ENCODE measurements at regions of chr17 and their contacts with region 1.

Region 1: DNA sequence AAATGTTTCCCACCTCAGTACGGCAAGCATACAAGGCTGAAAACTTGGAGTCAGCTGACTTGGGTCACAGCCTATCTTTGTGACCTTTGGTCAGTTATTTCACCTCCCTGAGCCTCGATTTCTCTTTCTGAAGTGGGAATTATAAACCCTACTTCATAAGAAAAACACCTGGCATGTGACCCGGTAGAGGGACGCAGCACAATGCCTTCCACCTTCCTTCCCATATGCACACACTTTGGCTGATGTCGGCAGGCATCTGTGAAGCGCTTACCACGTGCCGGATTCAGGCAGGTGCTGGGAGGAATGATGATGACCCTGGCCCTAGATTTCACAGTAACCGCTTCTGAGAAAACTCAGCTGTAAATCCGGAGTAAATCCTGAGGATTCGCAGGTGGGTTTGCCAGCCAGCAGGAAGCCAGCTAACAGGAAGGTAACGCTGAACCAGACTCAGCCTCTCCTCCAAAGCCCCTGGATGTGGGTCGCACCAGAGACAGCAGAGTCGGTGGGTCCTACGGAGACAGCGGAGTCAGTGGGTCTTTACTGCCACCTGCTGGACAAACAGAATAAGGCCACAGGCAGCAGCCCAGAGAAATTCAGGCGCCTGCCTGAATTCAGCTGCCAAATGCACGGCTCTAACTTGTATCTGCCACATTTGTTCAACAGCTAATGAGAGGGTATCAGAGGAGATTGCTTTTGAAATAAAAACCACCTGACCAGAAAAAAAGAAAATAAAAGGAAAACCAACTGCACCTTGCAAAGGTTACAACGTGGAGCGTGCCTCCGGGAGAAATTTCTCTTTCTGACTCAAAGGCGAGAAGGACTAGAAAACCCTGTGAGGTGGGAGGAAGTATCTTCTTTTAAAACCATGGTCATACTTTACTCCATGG is 16.6 kb downstream of the COPRS start:
- DNase-seq: peak; percentile 74
- H3K4me3 Mint-ChIP-seq: no peak overlapping the region
- H3K27ac Mint-ChIP-seq: no peak overlapping the region
- H3K4me1 Mint-ChIP-seq: no peaks in the 10 kb centered on the region
- H3K27me3 Mint-ChIP-seq: peaks cover 4% of the 10 kb centered on the region

Region 2: DNA sequence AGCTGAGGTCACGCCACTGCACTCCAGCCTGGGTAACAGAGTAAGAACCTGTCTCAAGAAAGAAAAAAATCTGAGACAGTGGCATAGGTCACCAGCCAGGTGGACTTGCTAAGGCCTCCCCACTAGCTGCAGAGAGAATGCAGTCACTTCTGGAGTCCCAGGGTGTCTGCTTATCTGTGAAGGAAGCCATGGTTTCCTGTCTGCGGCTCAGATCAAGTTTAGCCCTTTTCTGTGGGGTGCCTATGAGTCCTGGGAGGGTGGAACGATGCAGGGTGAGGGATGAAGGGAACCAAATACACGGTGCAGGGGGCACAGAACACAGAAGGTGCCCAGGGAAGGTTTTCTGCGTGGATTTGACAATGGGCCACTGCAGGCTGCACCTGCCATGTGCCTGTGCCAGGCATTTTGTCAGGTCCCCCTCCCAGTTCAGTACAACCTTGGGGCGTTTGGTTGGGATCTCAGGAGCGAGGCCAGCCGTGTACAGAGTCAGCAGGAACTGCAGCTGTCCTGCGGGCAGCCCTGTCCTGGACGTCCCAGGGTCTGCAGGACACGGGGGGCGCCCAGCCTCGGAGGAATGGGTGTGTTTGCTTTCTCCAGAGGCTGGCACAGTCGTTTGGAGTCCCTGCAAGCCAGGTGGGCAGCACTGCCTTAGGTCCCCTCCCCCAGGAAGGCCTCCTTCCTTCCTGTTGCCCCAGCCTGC is 409.2 kb before region 1 on chr17:
- CTCF ChIA-PET with region 1: interaction called, 23 read pairs
- POLR2A ChIA-PET with region 1: no interaction called
- intact Hi-C with region 1: loop called (anchors 5 kb)
- DNase-seq: peak; percentile 50
- H3K4me3 Mint-ChIP-seq: no peak overlapping the region
- H3K27ac Mint-ChIP-seq: no peak overlapping the region
- H3K4me1 Mint-ChIP-seq: peaks cover 16% of the 10 kb centered on the region
- H3K27me3 Mint-ChIP-seq: peaks cover 9% of the 10 kb centered on the region

Region 3: DNA sequence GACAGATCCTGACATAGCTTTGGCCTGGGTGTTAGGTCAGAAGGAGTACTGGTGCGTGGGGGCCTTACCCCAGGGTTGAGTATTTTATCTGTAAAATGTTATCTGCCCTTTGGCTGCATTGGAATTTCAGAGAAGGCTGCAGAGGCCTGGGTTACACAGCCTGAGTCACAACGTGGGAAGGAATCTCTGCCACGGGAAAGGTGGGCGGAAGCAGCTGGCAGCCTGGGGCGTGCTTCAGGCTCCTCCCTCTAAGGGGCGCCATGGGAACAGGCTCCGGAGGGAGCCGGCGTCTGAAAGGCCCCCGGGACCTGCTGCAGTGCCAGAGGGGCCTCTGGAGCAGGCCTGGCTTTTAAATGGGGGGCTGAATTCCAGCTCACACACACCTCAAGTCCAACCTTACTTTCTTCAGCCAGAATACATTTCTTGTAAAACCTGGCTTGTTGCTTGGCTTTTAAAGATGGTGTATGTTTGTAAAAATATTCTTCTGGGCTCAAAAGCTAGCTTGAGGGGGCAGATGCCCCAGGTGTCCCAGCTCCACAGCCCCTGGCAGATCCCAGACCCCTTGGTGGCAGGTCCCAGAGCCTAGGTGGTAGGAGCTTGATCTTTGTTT is 308.8 kb before region 1 on chr17:
- CTCF ChIA-PET with region 1: interaction called, 23 read pairs
- POLR2A ChIA-PET with region 1: no interaction called
- intact Hi-C with region 1: no loop called
- DNase-seq: peak; percentile 41
- H3K4me3 Mint-ChIP-seq: no peak overlapping the region
- H3K27ac Mint-ChIP-seq: no peak overlapping the region
- H3K4me1 Mint-ChIP-seq: peaks cover 16% of the 10 kb centered on the region
- H3K27me3 Mint-ChIP-seq: no peaks in the 10 kb centered on the region

Region 4: GRCh38 chr17:31549525-31550388 is 292.7 kb before region 1 on chr17:
- CTCF ChIA-PET with region 1: interaction called, 23 read pairs
- POLR2A ChIA-PET with region 1: no interaction called
- intact Hi-C with region 1: loop called (anchors 5 kb)
- DNase-seq: peak; percentile 96
- H3K4me3 Mint-ChIP-seq: peak overlapping the region; percentile 95
- H3K27ac Mint-ChIP-seq: peak overlapping the region; percentile 87
- H3K4me1 Mint-ChIP-seq: peaks cover 18% of the 10 kb centered on the region
- H3K27me3 Mint-ChIP-seq: no peaks in the 10 kb centered on the region

Region 5: GRCh38 chr17:31558748-31559644 is 283.4 kb before region 1 on chr17:
- CTCF ChIA-PET with region 1: interaction called, 48 read pairs
- POLR2A ChIA-PET with region 1: no interaction called
- intact Hi-C with region 1: no loop called
- DNase-seq: peak; percentile 69
- H3K4me3 Mint-ChIP-seq: peak overlapping the region; percentile 59
- H3K27ac Mint-ChIP-seq: no peak overlapping the region
- H3K4me1 Mint-ChIP-seq: peaks cover 26% of the 10 kb centered on the region
- H3K27me3 Mint-ChIP-seq: peaks cover 4% of the 10 kb centered on the region

Region 6: DNA sequence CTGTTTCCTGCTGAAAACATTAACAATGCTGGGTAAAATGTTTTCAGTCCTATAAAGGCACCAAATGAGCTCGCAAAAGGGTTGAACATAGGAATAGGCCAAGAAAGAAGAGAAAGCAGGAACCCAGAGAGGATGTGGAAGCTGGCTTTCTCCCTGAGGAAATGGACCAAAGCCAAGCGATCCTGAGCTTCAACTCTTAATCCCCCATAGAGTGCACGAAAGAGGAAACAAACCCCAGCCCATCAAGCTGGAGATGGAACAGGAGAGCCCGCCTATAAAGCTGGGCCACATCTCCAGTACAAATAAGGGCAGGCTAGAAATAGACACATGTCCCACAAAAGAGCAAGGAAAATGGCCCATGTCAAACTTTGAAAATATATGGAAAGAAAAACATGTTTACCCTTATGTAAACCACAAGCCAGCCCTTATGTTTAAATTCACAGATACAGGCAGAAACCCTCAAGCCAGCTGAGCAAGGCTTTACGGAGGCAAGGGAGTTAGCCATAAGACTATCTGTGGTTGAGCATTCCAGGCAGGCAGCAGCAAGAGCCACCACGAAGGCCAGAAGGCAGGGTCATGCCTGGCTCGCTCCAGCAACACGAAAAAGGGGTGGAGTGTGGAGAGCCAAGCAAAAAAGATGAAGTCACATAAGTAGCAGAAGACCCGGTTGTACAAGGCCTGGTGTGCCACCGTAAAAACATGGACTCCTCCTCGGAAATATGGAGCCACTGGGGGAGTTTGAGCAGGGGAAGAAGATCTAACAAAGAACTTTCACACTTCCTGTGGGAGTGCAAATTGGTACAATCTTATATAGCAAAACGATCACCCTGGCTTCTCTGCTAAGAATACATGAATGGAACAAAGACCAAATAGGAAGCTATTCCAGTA is 11.2 kb before region 1 on chr17:
- CTCF ChIA-PET with region 1: interaction called, 15 read pairs
- POLR2A ChIA-PET with region 1: no interaction called
- intact Hi-C with region 1: no loop called
- DNase-seq: no peak
- H3K4me3 Mint-ChIP-seq: no peak overlapping the region
- H3K27ac Mint-ChIP-seq: no peak overlapping the region
- H3K4me1 Mint-ChIP-seq: peaks cover 4% of the 10 kb centered on the region
- H3K27me3 Mint-ChIP-seq: peaks cover 1% of the 10 kb centered on the region

Region 7: DNA sequence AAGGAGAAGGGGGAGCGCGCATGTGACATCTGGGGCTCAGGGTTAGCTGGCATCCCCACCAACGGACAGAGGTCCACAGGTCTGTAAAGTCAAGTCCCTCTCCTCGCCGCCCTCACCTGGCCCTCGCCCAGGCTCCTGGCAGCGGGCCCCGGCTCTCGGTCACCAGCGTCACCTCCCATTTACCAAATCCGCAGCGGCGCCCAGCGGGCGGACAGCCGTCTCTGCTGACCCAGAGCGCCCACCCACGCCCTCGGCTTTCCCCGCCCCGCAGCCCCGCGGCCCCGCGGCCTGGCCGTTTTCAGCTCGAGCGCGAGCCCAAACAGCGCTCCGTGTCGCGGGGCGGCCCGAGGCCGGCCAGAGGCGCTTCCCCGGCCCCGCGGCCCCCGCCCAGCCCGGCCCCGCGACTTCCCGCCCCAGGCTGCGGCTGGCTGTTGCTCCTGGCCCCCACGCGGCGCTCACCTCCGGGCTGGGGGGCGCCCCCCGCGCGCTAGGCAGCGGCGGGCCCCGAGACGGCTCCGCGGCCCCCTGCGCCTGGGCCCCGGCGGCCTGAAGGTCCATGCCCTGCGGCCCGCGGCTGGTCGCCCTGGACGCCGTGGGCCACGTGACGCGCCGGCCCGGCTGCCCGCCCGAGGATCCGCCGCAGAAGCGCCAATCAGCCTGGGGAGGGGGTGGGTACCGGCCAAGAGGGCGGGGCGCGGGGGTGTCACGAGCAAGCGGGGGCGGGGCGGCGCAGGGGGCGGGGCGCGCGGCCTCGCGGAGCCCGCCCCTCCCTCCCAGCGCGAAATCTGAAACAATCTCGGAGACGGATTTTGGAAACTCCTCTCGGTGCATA is 16.4 kb after region 1 on chr17 and contains the start of gene COPRS:
- CTCF ChIA-PET with region 1: interaction called, 44 read pairs
- POLR2A ChIA-PET with region 1: no interaction called
- intact Hi-C with region 1: no loop called
- DNase-seq: peak; percentile 87
- H3K4me3 Mint-ChIP-seq: peak within 1 kb of the TSS; percentile 86
- H3K27ac Mint-ChIP-seq: peak within 1 kb of the TSS; percentile 73
- H3K4me1 Mint-ChIP-seq: peaks cover 18% of the 10 kb centered on the region
- H3K27me3 Mint-ChIP-seq: no peaks in the 10 kb centered on the region
- total RNA-seq, gene COPRS: 49.6 to 50.3 TPM

Region 8: GRCh38 chr17:31935512-31935911 is 93.1 kb after region 1 on chr17:
- CTCF ChIA-PET with region 1: no interaction called
- POLR2A ChIA-PET with region 1: no interaction called
- intact Hi-C with region 1: no loop called
- DNase-seq: no peak
- H3K4me3 Mint-ChIP-seq: peak overlapping the region; percentile 8
- H3K27ac Mint-ChIP-seq: no peak overlapping the region
- H3K4me1 Mint-ChIP-seq: peaks cover 21% of the 10 kb centered on the region
- H3K27me3 Mint-ChIP-seq: no peaks in the 10 kb centered on the region

Region 9: GRCh38 chr17:32127158-32127897 is 284.9 kb after region 1 on chr17:
- CTCF ChIA-PET with region 1: no interaction called
- POLR2A ChIA-PET with region 1: no interaction called
- intact Hi-C with region 1: no loop called
- DNase-seq: peak; percentile 90
- H3K4me3 Mint-ChIP-seq: peak overlapping the region; percentile 94
- H3K27ac Mint-ChIP-seq: peak overlapping the region; percentile 94
- H3K4me1 Mint-ChIP-seq: peaks cover 16% of the 10 kb centered on the region
- H3K27me3 Mint-ChIP-seq: no peaks in the 10 kb centered on the region

Measured in activated CD4-positive, alpha-beta memory T cell treated with anti-CD3 and anti-CD28 coated beads for 36 hours (primary cell).